AG04449 (cell line): ENCODE measurements at regions of chr11 and their contacts with region 1.

Region 1: DNA sequence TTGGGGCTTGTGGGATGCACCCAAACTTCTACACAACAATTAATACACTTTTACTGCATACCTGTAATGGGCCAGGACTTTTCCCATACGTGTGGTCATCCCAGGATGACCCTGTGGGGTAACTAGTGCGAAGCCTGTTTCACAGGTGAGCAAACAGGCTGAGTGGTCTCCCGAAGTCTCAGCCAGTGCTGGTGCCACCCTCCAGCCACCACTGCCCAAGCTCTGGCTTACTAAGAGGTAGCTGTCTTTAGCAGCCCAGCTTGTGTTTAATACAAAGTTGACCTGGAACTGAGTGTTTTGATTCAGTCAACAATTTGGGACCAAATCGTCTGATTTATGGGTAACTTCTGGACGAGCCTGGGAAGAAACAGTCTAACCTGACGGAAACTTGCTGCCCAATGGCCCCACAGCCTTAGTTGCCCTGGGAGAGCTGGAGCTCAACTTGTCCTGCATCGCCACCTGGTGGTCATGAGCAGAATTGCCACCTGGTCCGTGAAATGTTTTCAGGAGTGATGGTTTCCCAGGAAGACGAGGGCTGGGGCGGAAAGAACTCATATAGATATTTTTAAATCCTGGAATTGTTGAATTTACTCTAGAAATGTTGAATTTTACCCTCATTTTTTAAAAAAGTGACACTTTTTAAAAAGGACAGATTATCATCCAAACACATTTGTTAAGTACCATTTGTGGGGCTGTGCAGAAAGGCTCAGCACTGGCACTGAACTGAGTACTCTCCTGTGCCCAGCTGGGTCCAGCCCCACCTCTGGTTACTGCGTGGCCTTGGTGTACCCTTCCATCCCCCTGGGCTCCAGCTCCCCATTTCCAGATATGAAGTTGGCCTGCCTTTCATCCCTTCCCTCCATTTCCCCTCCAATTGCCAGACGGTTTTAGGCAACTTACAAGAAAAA is 95.5 kb upstream of the PARVA start:
- DNase-seq: no peak
- H3K4me3 ChIP-seq: no peak overlapping the region
- CTCF ChIP-seq: peak; percentile 84

Region 2: GRCh38 chr11:11798586-11799438 is 483.0 kb before region 1 on chr11:
- CTCF ChIA-PET with region 1: interaction called, 41 read pairs
- POLR2A ChIA-PET with region 1: no interaction called
- DNase-seq: no peak
- H3K4me3 ChIP-seq: no peak overlapping the region
- CTCF ChIP-seq: peak; percentile 88

Region 3: GRCh38 chr11:12043959-12044819 is 237.6 kb before region 1 on chr11:
- CTCF ChIA-PET with region 1: interaction called, 652 read pairs
- POLR2A ChIA-PET with region 1: interaction called, 4 read pairs
- DNase-seq: peak; percentile 94
- H3K4me3 ChIP-seq: peak overlapping the region; percentile 34
- CTCF ChIP-seq: peak; percentile 82

Region 4: DNA sequence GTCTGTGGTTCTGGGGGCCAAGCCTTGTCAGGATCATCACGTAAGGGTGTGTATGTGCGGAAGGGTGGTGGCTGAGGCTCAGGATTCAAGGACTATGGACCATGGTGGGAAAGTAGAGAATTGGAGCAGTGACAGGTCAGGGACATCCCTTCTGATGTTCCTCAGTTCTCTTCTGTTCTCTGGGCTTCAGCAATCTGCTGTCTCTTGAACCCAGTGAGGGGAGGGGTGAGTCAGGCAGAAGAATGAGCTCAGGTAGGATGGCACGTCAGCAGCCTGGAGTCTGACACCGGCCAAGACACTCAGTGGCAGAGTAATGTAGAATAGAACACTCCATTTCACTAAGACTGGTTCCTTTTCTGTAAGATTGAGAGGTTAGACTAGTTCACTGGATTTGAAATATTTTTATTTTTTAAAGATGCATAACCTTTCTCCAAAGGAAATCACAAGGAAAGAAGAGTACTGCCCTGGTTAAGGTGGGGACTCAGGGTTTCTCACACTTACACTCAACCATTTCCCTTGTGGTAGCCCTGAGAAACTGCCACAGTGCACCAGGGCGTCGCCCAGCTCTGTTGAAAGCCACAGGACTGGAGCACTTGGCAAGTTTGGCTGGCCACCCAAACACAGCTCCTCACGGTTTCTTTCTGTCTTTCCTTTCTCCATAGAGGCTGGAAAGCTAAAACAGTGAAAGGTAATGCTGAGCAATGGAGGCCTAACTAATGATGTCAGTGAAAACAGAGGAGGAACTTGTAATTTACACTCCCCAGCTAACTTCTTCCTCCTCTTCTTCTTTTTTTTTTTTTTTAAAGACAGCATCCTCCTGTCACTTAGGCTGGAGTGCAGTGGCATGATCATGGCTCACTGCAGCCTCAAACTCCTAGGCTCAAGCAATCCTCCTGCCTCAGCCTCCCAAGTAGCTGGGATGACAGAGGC is 194.5 kb before region 1 on chr11:
- CTCF ChIA-PET with region 1: interaction called, 14 read pairs
- POLR2A ChIA-PET with region 1: interaction called, 31 read pairs
- DNase-seq: no peak
- H3K4me3 ChIP-seq: peak overlapping the region; percentile 46
- CTCF ChIP-seq: peak; percentile 20

Region 5: DNA sequence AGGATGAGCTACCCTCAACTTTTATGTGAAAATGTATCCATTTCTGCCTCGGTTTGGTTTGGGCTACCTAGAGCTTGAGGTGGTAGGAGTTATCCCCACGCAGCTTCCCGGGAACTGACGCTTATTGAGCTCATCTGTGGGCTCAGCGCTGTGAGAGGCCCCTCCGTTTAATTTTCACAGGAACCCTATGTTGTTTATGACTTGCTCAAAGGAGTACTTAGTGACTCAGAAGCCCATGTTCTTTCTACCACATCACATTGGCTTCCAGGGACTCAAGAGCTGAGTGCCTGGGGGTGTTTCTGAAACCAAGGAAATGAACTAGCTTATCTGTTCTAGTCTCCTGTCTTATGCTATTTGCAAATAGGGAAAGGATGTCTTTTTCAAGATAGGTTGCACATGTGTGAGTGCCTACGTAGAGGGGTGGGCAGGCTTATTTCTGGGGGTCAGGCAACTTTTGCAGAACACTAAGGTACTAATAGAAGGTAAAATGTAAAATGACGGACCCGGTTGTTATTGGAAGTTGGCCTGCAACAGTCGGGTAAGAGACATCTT is 130.9 kb before region 1 on chr11:
- CTCF ChIA-PET with region 1: no interaction called
- POLR2A ChIA-PET with region 1: no interaction called
- DNase-seq: no peak
- H3K4me3 ChIP-seq: no peak overlapping the region
- CTCF ChIP-seq: no peak

Region 6: GRCh38 chr11:12200279-12201010 is 81.4 kb before region 1 on chr11:
- CTCF ChIA-PET with region 1: interaction called, 14 read pairs
- POLR2A ChIA-PET with region 1: interaction called, 6 read pairs
- DNase-seq: peak; percentile 95
- H3K4me3 ChIP-seq: no peak overlapping the region
- CTCF ChIP-seq: no peak

Region 7: GRCh38 chr11:12235947-12236743 is 45.7 kb before region 1 on chr11:
- CTCF ChIA-PET with region 1: interaction called, 50 read pairs
- POLR2A ChIA-PET with region 1: no interaction called
- DNase-seq: no peak
- H3K4me3 ChIP-seq: no peak overlapping the region
- CTCF ChIP-seq: peak; percentile 46

Region 8: GRCh38 chr11:12260731-12261521 is 20.9 kb before region 1 on chr11:
- CTCF ChIA-PET with region 1: interaction called, 13 read pairs
- POLR2A ChIA-PET with region 1: no interaction called
- DNase-seq: no peak
- H3K4me3 ChIP-seq: no peak overlapping the region
- CTCF ChIP-seq: no peak

Region 9: GRCh38 chr11:12361682-12362081 is 79.9 kb after region 1 on chr11:
- CTCF ChIA-PET with region 1: no interaction called
- POLR2A ChIA-PET with region 1: no interaction called
- DNase-seq: no peak
- H3K4me3 ChIP-seq: no peak overlapping the region
- CTCF ChIP-seq: no peak